CD4-positive, alpha-beta T cell (primary cell): ENCODE measurements at regions of chr21 and their contacts with region 1.

Region 1: DNA sequence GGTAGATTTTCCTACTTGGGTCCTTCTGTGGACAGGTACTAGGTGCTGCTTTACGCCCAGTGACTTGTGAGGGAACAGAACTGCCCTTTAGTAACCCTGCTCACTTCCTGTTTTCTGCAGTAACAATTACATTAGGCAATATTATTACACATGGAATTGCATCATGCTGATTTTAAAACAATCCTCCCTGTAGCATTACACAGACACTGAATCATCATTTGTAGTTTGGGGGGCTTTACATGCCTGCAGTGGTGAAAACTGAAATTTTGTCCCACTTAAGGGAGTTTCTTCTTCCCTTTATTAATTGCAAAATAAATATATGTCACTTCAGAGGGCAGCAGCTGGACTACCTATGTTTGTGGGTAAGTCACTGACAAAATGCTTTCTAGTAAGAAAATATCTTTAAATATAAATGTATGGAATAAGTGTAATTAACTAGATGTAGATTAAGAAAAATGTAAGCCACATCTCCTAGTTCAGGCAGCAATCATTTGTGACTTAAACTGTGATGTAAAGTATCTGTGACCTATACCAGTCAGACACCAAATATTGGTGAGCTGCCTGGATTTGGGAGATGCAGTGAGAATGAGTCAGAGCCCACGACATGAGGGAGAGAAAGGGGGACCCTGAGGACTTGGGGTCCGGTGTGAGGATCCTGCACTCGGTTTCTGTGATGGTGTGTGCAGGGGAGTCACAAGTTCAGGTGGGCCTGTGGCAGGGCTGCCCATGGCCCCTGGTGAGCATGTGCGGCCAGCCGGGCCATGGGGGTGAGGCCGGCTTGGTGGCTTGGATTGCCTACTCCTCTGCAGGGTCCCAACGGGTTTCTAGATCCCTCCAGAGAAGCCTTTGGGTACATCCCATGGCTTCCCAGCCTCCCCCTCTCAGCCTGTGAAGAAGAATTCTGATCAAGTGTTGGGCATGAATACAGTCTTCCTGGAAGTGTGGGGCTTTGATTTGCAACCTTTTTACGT is 19.2 kb upstream of the ABCG1 start:
- DNase-seq: peak in 5 of 14 experiments; percentile 30 to 77 (median 71)
- ATAC-seq: peak; percentile 84
- H3K4me3 ChIP-seq: no peak overlapping the region
- H3K4me3 Mint-ChIP-seq: peak overlapping the region; percentile 31
- H3K27ac ChIP-seq: peak overlapping the region in 1 of 2 donors; percentile 64
- H3K27ac Mint-ChIP-seq: peak overlapping the region; percentile 94
- H3K4me1 ChIP-seq: peaks cover 33% of the 10 kb centered on the region
- H3K4me1 Mint-ChIP-seq: peaks cover 71% of the 10 kb centered on the region
- H3K27me3 ChIP-seq: no peaks in the 10 kb centered on the region
- H3K27me3 Mint-ChIP-seq: no peaks in the 10 kb centered on the region
- CTCF ChIP-seq: no peak

Region 2: DNA sequence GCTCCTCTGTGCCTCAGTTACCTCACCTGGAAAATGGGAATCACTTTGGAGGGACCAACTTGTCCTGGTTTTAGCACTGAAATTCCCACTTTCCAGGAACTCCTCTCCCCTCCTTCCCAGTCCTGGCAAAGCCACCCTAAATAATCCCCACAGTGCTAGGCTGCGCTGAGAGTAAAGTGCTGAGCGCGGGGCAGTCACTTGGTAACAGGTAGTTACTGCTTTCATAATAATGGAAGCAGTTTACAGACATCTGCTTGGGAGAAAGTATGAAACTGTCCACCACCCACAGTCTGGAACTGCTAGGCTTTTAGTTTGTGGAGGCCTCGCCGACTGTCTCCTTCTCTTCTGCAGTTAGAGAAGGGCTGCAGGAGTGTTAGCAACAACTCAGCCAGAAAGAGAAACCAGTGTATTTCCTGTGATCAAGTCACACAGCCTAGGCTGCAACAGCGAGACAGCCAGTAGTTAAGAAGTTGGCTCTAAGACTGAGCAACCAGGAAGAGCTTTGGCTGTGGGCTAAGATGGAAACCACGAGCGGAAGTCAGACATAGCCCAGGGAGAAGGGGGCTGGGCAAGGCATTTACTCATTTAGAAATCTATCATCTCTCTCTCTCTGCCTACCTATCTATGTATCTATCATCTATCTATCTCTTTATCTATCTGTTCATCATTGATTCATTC is 11.7 kb before region 1 on chr21:
- CTCF ChIA-PET with region 1: no interaction called
- POLR2A ChIA-PET with region 1: interaction called, 8 read pairs
- intact Hi-C with region 1: loop called in 1 of 2 experiments (anchors 1 kb)
- DNase-seq: peak; percentile 61 to 94 (median 76)
- ATAC-seq: peak; percentile 90
- H3K4me3 ChIP-seq: peak overlapping the region; percentile 21
- H3K4me3 Mint-ChIP-seq: peak overlapping the region; percentile 74
- H3K27ac ChIP-seq: peak overlapping the region; percentile 83 to 88
- H3K27ac Mint-ChIP-seq: no peak overlapping the region
- H3K4me1 ChIP-seq: peaks cover 89% of the 10 kb centered on the region
- H3K4me1 Mint-ChIP-seq: peaks cover 73% of the 10 kb centered on the region
- H3K27me3 ChIP-seq: no peaks in the 10 kb centered on the region
- H3K27me3 Mint-ChIP-seq: no peaks in the 10 kb centered on the region
- CTCF ChIP-seq: no peak